Gastrocnemius medialis (tissue), 4 donors: ENCODE measurements at regions of chr5 and their contacts with region 1.

Region 1: GRCh38 chr5:180860887-180861822 is at the start of gene ZFP62:
- DNase-seq: peak; percentile 69 to 83
- ATAC-seq: peak; percentile 92 to 94
- H3K4me3 ChIP-seq: peak within 1 kb of the TSS; percentile 81 to 99 (median 95)
- H3K27ac ChIP-seq: peak within 1 kb of the TSS; percentile 80 to 94 (median 90)
- H3K4me1 ChIP-seq: peaks cover 8 to 13% of the 10 kb centered on the region in 2 donors
- H3K27me3 ChIP-seq: no peaks in the 10 kb centered on the region
- CTCF ChIP-seq: peak in 2 of 5 experiments; percentile 21 to 33
- POLR2A ChIP-seq: peak; percentile 55 to 71
- total RNA-seq, gene ZFP62: 8.9 to 14.7 (median 10.2) TPM

Region 2: GRCh38 chr5:180455873-180456272 is 405.3 kb before region 1 on chr5:
- in situ Hi-C with region 1: no loop called
- intact Hi-C with region 1: no loop called
- DNase-seq: no peak
- ATAC-seq: no peak
- H3K4me3 ChIP-seq: no peak overlapping the region
- H3K27ac ChIP-seq: no peak overlapping the region
- H3K4me1 ChIP-seq: no peaks in the 10 kb centered on the region
- H3K27me3 ChIP-seq: no peaks in the 10 kb centered on the region
- CTCF ChIP-seq: no peak
- POLR2A ChIP-seq: no peak

Region 3: GRCh38 chr5:180784497-180785097 is 76.6 kb before region 1 on chr5:
- in situ Hi-C with region 1: no loop called
- intact Hi-C with region 1: loop called (anchors 2 kb)
- DNase-seq: peak; percentile 57 to 76
- ATAC-seq: peak; percentile 82 to 86
- H3K4me3 ChIP-seq: peak overlapping the region in 1 of 4 donors; percentile 21
- H3K27ac ChIP-seq: peak overlapping the region in 3 of 4 donors; percentile 62 to 73 (median 65)
- H3K4me1 ChIP-seq: peaks cover 21 to 31% of the 10 kb centered on the region in 2 donors
- H3K27me3 ChIP-seq: no peaks in the 10 kb centered on the region
- CTCF ChIP-seq: peak; percentile 42 to 82 (median 67)
- POLR2A ChIP-seq: no peak

Region 4: GRCh38 chr5:180802325-180803180 is 58.6 kb before region 1 on chr5 and contains the start of gene MGAT1:
- in situ Hi-C with region 1: loop called in 1 of 4 experiments (anchors 5 kb)
- intact Hi-C with region 1: loop called (anchors 2 kb)
- DNase-seq: peak; percentile 81 to 85
- ATAC-seq: peak; percentile 82
- H3K4me3 ChIP-seq: peak within 1 kb of the TSS; percentile 96 to 99 (median 96)
- H3K27ac ChIP-seq: peak within 1 kb of the TSS; percentile 94 to 100 (median 100)
- H3K4me1 ChIP-seq: peaks cover 83 to 92% of the 10 kb centered on the region in 2 donors
- H3K27me3 ChIP-seq: no peaks in the 10 kb centered on the region
- CTCF ChIP-seq: no peak
- POLR2A ChIP-seq: peak; percentile 93 to 95
- total RNA-seq, gene MGAT1: 100 to 138 (median 115) TPM

Region 5: GRCh38 chr5:181052672-181053487 is 191.7 kb after region 1 on chr5:
- in situ Hi-C with region 1: no loop called
- intact Hi-C with region 1: loop called (anchors 10 kb)
- DNase-seq: no peak
- ATAC-seq: no peak
- H3K4me3 ChIP-seq: peak overlapping the region; percentile 33 to 55 (median 48)
- H3K27ac ChIP-seq: peak overlapping the region in 3 of 4 donors; percentile 39 to 60 (median 58)
- H3K4me1 ChIP-seq: peaks cover 0 to 3% of the 10 kb centered on the region in 2 donors
- H3K27me3 ChIP-seq: peaks cover 57 to 72% (median 64%) of the 10 kb centered on the region in 3 donors
- CTCF ChIP-seq: no peak
- POLR2A ChIP-seq: no peak

Region 6: GRCh38 chr5:181181650-181182565 is 320.8 kb after region 1 on chr5:
- in situ Hi-C with region 1: no loop called
- intact Hi-C with region 1: loop called (anchors 10 kb)
- DNase-seq: peak in 1 of 2 donors; percentile 70
- ATAC-seq: peak; percentile 88 to 89
- H3K4me3 ChIP-seq: no peak overlapping the region
- H3K27ac ChIP-seq: peak overlapping the region in 3 of 4 donors; percentile 28 to 48 (median 41)
- H3K4me1 ChIP-seq: peaks cover 4 to 7% of the 10 kb centered on the region in 2 donors
- H3K27me3 ChIP-seq: no peaks in the 10 kb centered on the region
- CTCF ChIP-seq: peak; percentile 76 to 88 (median 79)
- POLR2A ChIP-seq: no peak